ENCODE measurements at regions of chr10 and their contacts with region 1.

Region 1: DNA sequence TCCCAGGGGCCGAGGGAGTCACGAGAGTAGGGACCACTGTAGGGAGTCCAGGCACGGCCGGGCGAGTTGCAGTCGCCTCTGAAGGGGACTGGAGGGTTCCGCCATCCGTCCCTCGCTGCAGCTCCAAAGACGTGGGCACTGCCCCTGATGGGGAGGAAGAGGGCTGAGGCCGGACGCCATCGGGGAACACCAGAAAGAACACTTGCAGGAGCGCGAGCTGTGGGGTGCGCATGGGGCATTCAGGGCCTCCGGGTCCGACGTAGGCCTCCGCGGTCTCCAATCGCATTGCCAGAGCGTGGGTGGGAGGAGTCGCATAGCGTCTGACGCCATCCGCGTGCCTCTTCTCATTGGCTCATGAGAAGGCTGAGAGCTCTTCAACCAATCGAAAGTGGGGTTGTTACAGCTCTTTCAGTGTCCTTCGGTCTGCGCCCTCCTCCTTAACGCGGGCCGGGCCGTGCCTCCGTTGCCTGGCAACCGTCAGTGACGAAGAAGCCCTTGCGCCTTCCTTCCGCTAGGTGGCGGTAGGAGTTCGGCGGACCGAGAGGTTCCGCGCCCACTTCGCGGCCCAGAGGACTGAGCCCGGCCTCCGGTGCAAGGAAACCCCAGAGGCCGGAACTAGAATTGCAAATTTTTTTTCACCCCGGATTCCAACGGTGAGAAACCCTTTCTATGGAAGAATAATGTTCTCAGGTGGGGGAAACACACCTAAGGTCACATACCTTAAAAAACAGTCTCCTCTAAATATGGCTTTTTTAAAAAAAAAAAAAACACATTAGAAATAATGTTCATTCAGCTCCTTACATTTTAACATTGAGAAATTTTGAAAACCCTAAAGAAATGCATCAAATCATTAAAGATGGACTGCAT is at the start of gene TCTN3:
- DNase-seq: peak; percentile 88 to 99 (median 95)
- ATAC-seq: peak; percentile 98 to 99 (median 98)
- H3K4me3 ChIP-seq: peak within 1 kb of the TSS; percentile 71 to 91
- H3K4me3 Mint-ChIP-seq: peak within 1 kb of the TSS; percentile 95 to 98 (median 96)
- H3K27ac ChIP-seq: peak within 1 kb of the TSS; percentile 80
- H3K27ac Mint-ChIP-seq: peak within 1 kb of the TSS; percentile 88 to 93
- H3K4me1 ChIP-seq: peaks cover 5 to 23% of the 10 kb centered on the region in 2 experiments
- H3K4me1 Mint-ChIP-seq: peaks cover 45 to 55% (median 48%) of the 10 kb centered on the region in 3 donors
- H3K27me3 ChIP-seq: peaks cover 0 to 5% of the 10 kb centered on the region in 2 experiments
- H3K27me3 Mint-ChIP-seq: peaks cover 0 to 2% of the 10 kb centered on the region in 2 donors
- total RNA-seq, gene TCTN3: 16.2 to 20.2 (median 18.8) TPM

Region 2: DNA sequence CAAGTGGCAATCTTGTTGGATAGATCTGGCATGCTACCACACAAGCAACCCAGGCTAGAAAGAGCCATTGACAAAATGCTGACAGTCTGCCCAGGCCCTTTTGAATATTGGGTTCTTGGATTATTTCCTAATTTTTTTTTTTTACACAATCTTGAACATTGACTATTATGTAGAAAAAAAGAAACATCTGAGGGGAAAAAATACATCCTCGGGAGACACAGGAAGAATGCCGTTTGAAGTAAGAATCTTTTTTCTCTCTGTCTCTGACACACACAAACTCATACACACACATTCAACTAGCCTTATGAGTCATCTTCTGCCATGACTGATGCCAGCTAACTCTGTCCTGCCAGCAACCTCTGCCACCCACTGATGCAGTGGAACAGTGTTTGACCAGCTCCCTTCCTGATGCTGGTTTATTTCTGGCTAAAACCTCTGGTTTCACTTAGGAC is 179.9 kb before region 1 on chr10:
- CTCF ChIA-PET with region 1: no interaction called
- POLR2A ChIA-PET with region 1: no interaction called
- DNase-seq: no peak
- ATAC-seq: no peak
- H3K4me3 ChIP-seq: no peak overlapping the region
- H3K4me3 Mint-ChIP-seq: no peak overlapping the region
- H3K27ac ChIP-seq: no peak overlapping the region
- H3K27ac Mint-ChIP-seq: no peak overlapping the region
- H3K4me1 ChIP-seq: no peaks in the 10 kb centered on the region
- H3K4me1 Mint-ChIP-seq: no peaks in the 10 kb centered on the region
- H3K27me3 ChIP-seq: peaks cover 0 to 8% of the 10 kb centered on the region in 2 experiments
- H3K27me3 Mint-ChIP-seq: peaks cover 3 to 13% of the 10 kb centered on the region in 2 donors

Region 3: DNA sequence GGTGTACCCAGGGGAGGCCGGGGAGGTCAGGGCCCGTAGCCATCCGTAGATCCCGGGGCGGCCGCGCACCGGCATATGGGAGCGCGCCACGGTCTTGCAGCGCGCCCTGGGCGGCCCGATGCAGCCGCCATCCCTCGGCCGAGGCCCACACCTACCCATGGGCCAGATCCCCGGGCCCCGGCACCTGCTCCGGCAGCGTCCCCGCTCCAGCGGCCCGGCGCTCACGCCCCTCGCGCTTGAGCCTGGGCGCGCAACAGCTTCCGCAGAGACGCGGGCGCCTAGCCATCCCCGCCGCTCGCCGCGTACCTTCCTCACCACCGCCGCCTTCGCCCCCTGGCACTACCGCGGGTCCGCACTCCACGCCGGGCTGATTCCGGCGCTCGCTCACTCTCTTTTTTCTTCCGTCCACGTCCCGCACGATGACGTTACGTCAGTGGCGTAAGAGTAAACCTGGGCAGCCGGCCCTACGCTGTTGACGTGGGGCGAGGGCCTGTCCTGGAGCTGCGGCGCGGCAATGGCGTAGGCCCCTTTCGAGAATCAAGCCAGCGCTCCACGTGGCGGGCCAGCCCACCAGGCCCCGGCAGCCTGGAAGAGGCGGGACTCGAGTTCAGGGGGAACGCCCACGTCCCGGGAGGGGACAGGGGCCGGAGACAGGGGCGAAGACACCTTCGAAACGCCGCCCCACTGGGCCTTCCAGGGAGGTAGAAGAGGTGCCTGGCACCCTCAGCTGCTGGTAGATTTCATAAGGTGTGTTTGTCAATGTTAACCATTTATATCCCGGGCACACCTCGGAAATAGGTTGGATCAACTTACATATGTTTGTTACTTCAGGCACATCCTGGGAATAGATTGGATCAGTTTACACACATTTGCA is 37.4 kb before region 1 on chr10 and contains the start of gene ALDH18A1:
- CTCF ChIA-PET with region 1: interaction called, 4 to 35 read pairs
- POLR2A ChIA-PET with region 1: no interaction called
- DNase-seq: peak; percentile 73 to 96 (median 83)
- ATAC-seq: peak; percentile 90 to 95 (median 93)
- H3K4me3 ChIP-seq: peak within 1 kb of the TSS; percentile 78 to 81
- H3K4me3 Mint-ChIP-seq: peak within 1 kb of the TSS; percentile 97 to 99 (median 99)
- H3K27ac ChIP-seq: peak within 1 kb of the TSS; percentile 41
- H3K27ac Mint-ChIP-seq: peak within 1 kb of the TSS; percentile 77 to 90
- H3K4me1 ChIP-seq: peaks cover 8 to 13% of the 10 kb centered on the region in 2 experiments
- H3K4me1 Mint-ChIP-seq: peaks cover 24 to 29% (median 28%) of the 10 kb centered on the region in 3 donors
- H3K27me3 ChIP-seq: no peaks in the 10 kb centered on the region
- H3K27me3 Mint-ChIP-seq: no peaks in the 10 kb centered on the region
- total RNA-seq, gene ALDH18A1: 24.7 to 32.7 (median 28.4) TPM

Region 4: DNA sequence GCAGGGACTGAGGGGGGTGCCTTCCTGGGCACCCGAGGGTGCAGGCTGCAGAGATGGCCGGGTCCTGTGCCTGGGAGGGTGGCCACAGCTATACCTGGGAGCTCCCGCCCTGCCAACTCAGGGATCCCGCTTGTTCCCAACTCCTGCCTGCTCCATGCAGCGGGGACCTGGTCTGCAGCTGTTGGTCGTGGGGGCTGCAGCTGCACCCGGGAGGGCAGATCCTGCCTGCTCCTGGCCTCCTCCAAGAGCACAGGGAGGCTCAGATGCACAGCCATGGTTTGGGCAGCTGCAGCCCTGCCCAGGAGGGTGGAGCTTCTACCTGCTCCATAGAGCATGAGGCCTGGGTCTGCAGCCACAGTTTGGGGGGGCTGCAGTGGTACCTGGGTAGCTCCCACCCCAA is 13.1 kb after region 1 on chr10:
- CTCF ChIA-PET with region 1: interaction called in 1 of 2 experiments, 10 read pairs
- POLR2A ChIA-PET with region 1: no interaction called
- DNase-seq: no peak
- ATAC-seq: no peak
- H3K4me3 ChIP-seq: no peak overlapping the region
- H3K4me3 Mint-ChIP-seq: no peak overlapping the region
- H3K27ac ChIP-seq: no peak overlapping the region
- H3K27ac Mint-ChIP-seq: no peak overlapping the region
- H3K4me1 ChIP-seq: no peaks in the 10 kb centered on the region
- H3K4me1 Mint-ChIP-seq: no peaks in the 10 kb centered on the region
- H3K27me3 ChIP-seq: no peaks in the 10 kb centered on the region
- H3K27me3 Mint-ChIP-seq: no peaks in the 10 kb centered on the region

Region 5: DNA sequence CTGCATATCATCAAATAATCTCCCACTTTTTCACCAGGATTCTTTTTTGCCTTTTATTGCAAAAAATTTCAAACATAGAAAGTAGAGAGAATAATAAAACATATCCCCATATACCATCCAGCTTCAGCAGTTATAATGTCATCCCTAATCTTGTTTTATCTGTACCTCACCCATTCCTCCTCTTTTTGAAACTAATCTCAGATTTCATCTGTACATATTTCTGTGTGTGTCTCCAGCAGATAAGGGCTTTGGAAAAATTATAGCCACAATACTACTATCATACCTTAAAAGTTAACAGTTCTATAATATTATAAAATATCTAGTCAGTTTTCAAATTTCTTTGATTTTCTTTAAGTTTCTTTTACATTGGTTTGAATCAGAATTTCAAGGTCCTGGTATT is 54.4 kb after region 1 on chr10:
- CTCF ChIA-PET with region 1: no interaction called
- POLR2A ChIA-PET with region 1: no interaction called
- DNase-seq: no peak
- ATAC-seq: no peak
- H3K4me3 ChIP-seq: no peak overlapping the region
- H3K4me3 Mint-ChIP-seq: no peak overlapping the region
- H3K27ac ChIP-seq: no peak overlapping the region
- H3K27ac Mint-ChIP-seq: no peak overlapping the region
- H3K4me1 ChIP-seq: no peaks in the 10 kb centered on the region
- H3K4me1 Mint-ChIP-seq: no peaks in the 10 kb centered on the region
- H3K27me3 ChIP-seq: peaks cover 0 to 3% of the 10 kb centered on the region in 2 experiments
- H3K27me3 Mint-ChIP-seq: peaks cover 12 to 13% of the 10 kb centered on the region in 2 donors

Region 6: DNA sequence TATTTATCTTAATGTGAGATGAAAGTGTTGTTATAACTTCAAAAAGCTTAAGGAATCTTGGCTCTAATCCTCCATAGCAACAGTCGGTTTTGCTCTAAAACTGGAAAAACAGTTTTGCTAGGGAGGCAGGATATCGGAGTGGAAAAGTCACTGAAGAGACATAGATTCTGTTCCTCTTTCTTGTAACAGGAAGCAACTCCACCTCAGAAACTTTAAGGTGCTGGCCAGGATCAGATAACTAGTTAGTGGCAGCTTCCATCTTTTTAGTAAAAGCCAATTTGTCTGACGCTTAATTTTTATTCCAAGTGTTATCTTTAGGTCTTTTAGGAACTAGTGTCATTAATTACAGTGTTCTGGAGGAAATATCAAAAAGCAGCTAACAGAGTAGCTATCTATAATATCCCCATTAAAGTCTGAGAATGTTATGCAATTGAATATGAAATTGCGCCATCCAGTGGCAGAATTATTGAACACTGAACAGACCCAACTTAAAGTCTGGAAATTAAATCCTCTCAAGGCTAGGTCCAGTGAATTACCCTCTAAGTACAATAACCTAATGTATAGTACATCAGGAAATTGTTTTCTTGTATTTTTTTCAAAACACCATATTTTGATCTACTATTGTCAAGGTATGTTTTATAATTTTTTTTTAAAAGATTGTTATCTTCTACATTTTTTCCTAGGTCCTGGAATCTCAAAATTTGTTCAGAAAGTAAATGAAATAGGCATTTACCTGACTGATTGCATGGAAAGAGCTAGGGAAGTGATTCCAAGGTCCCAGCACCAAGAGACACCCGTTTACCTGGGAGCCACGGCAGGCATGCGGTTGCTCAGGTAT is 148.0 kb after region 1 on chr10:
- CTCF ChIA-PET with region 1: interaction called, 32 to 173 read pairs
- POLR2A ChIA-PET with region 1: interaction called, 5 to 6 read pairs
- DNase-seq: peak in 20 of 35 experiments; percentile 3 to 80 (median 20)
- ATAC-seq: peak in 3 of 4 experiments; percentile 17 to 79 (median 71)
- H3K4me3 ChIP-seq: no peak overlapping the region
- H3K4me3 Mint-ChIP-seq: no peak overlapping the region
- H3K27ac ChIP-seq: no peak overlapping the region
- H3K27ac Mint-ChIP-seq: no peak overlapping the region
- H3K4me1 ChIP-seq: no peaks in the 10 kb centered on the region
- H3K4me1 Mint-ChIP-seq: peaks cover 4 to 17% (median 5%) of the 10 kb centered on the region in 3 donors
- H3K27me3 ChIP-seq: no peaks in the 10 kb centered on the region
- H3K27me3 Mint-ChIP-seq: peaks cover 0 to 3% of the 10 kb centered on the region in 2 donors

Region 7: DNA sequence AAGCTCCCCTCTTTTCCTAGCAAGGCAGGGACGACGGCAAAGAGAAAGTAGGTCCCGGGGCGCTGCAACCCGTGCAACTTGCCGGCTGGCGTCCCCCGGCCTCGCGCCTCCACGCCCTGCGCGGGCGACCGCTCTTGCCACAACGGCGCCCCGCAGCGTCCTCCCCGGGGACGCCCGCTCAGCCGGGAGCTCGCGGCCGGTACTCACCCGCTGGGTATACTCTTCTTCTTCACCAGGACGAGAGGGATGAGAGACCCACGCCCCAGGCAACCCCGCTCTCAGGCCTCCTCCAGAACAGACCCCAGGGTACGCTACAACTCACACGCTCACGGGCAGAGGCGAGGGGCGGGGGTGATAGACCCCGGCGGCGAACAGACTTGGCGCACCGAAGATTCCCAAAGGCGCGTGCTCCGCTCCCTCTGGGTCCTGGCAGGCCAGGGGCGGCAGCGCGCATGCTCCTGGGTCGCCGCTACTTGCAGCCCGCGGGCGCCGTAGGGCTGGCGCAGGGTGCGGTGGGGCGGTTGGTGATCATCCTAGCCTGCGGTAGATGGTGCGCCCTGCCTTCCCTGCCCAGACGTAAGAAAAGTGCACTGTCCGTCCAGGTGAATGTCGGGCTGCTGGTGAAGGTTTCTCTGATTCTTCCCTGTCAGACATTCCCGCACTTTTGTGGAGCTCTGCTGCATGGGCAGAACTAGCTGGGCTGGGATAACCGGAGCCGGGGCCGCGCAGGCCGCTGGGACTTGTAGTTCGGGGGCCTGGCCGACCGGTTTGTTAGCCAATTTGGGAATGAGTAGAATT is 213.8 kb after region 1 on chr10 and contains the start of gene CC2D2B:
- CTCF ChIA-PET with region 1: interaction called, 3 to 14 read pairs
- POLR2A ChIA-PET with region 1: no interaction called
- DNase-seq: peak in 34 of 35 experiments; percentile 14 to 68 (median 38)
- ATAC-seq: peak; percentile 85 to 90 (median 89)
- H3K4me3 ChIP-seq: peak within 1 kb of the TSS; percentile 84 to 88
- H3K4me3 Mint-ChIP-seq: peak within 1 kb of the TSS; percentile 89 to 91 (median 89)
- H3K27ac ChIP-seq: peak within 1 kb of the TSS; percentile 69
- H3K27ac Mint-ChIP-seq: peak within 1 kb of the TSS; percentile 86 to 88
- H3K4me1 ChIP-seq: peaks cover 0 to 2% of the 10 kb centered on the region in 2 experiments
- H3K4me1 Mint-ChIP-seq: peaks cover 11 to 17% (median 16%) of the 10 kb centered on the region in 3 donors
- H3K27me3 ChIP-seq: no peaks in the 10 kb centered on the region
- H3K27me3 Mint-ChIP-seq: no peaks in the 10 kb centered on the region
- total RNA-seq, gene CC2D2B: 0.25 TPM in 1 of 5 donors, not detected in the others

Region 8: GRCh38 chr10:96366502-96366901 is 672.6 kb after region 1 on chr10:
- CTCF ChIA-PET with region 1: no interaction called
- POLR2A ChIA-PET with region 1: no interaction called
- DNase-seq: no peak
- ATAC-seq: no peak
- H3K4me3 ChIP-seq: no peak overlapping the region
- H3K4me3 Mint-ChIP-seq: no peak overlapping the region
- H3K27ac ChIP-seq: no peak overlapping the region
- H3K27ac Mint-ChIP-seq: no peak overlapping the region
- H3K4me1 ChIP-seq: peaks cover 0 to 2% of the 10 kb centered on the region in 2 experiments
- H3K4me1 Mint-ChIP-seq: no peaks in the 10 kb centered on the region
- H3K27me3 ChIP-seq: peaks cover 0 to 12% of the 10 kb centered on the region in 2 experiments
- H3K27me3 Mint-ChIP-seq: peaks cover 0 to 2% of the 10 kb centered on the region in 2 donors

Region 9: GRCh38 chr10:96984541-96985131 is 1290.7 kb after region 1 on chr10:
- CTCF ChIA-PET with region 1: no interaction called
- POLR2A ChIA-PET with region 1: no interaction called
- DNase-seq: no peak
- ATAC-seq: no peak
- H3K4me3 ChIP-seq: no peak overlapping the region
- H3K4me3 Mint-ChIP-seq: peak overlapping the region in 1 of 3 donors; percentile 34
- H3K27ac ChIP-seq: no peak overlapping the region
- H3K27ac Mint-ChIP-seq: no peak overlapping the region
- H3K4me1 ChIP-seq: peaks cover 0 to 3% of the 10 kb centered on the region in 2 experiments
- H3K4me1 Mint-ChIP-seq: peaks cover 8 to 18% (median 8%) of the 10 kb centered on the region in 3 donors
- H3K27me3 ChIP-seq: no peaks in the 10 kb centered on the region
- H3K27me3 Mint-ChIP-seq: no peaks in the 10 kb centered on the region